HepG2 (cell line): ENCODE measurements at regions of chr12 and their contacts with region 1.

Region 1: DNA sequence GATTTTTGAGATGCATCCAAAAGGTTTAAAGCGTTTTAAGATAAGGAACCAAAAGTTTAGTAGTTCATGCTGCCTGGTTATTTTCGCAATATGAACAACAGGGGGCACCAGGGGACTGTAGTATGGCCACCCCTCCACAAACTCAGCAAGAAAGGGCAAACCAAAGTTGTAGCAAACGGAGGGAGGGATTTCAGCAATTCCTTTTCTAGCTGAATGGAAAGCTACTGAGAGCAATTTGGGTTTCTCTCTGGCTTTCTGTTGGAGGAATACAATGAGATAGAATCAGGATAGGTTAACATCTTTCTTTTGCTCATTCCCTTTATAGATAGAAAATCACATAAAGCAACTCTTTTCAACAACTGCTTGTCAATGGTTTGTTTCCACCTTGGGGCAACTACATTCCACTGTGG is 62.5 kb downstream of the DRAM1 start:
- DNase-seq: peak; percentile 60
- ATAC-seq: peak; percentile 89
- H3K4me3 ChIP-seq: no peak overlapping the region
- H3K27ac ChIP-seq: no peak overlapping the region
- H3K4me1 ChIP-seq: peaks cover 4% of the 10 kb centered on the region; the same call in 1 of the 2 replicates
- H3K27me3 ChIP-seq: peaks cover 0 to 3% of the 10 kb centered on the region in 2 experiments; a peak in 1 of 5 replicates
- CTCF ChIP-seq: peak; percentile 84
- EP300 ChIP-seq: no peak
- POLR2A ChIP-seq: no peak
- RAD21 ChIP-seq: peak; percentile 70

Region 2: DNA sequence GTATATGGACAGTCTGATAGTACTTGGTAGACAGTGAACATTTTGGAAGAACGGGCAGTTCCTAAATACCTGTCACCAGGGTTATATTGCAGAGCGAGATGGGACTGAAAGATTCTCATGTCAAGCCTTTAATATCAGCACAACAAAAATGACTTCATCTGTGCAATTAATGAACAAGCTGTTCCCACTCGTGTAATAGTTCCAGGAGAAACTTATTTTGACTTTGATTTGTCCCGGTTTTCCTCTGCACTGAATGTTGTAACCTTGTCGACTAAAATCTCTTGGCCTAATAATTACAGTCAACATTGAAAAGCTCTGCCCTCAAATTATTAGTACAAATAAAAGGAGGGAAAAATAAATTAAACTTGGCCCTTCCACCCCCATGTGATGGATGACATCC is 42.4 kb after region 1 on chr12:
- CTCF ChIA-PET with region 1: no interaction called
- POLR2A ChIA-PET with region 1: no interaction called
- in situ Hi-C with region 1: no loop called
- intact Hi-C with region 1: no loop called
- DNase-seq: no peak
- ATAC-seq: no peak
- H3K4me3 ChIP-seq: no peak overlapping the region
- H3K27ac ChIP-seq: no peak overlapping the region
- H3K4me1 ChIP-seq: no peaks in the 10 kb centered on the region
- H3K27me3 ChIP-seq: peaks cover 0 to 4% of the 10 kb centered on the region in 2 experiments; a peak in 1 of 5 replicates
- CTCF ChIP-seq: no peak
- EP300 ChIP-seq: no peak
- POLR2A ChIP-seq: no peak
- RAD21 ChIP-seq: no peak

Region 3: GRCh38 chr12:102095675-102096263 is 155.9 kb after region 1 on chr12:
- CTCF ChIA-PET with region 1: no interaction called
- POLR2A ChIA-PET with region 1: no interaction called
- in situ Hi-C with region 1: no loop called
- intact Hi-C with region 1: loop called (anchors 10 kb)
- DNase-seq: peak; percentile 9
- ATAC-seq: peak; percentile 64; the same call in 2 of the 3 replicates
- H3K4me3 ChIP-seq: no peak overlapping the region
- H3K27ac ChIP-seq: no peak overlapping the region
- H3K4me1 ChIP-seq: no peaks in the 10 kb centered on the region
- H3K27me3 ChIP-seq: no peaks in the 10 kb centered on the region
- CTCF ChIP-seq: peak; percentile 31
- EP300 ChIP-seq: no peak
- POLR2A ChIP-seq: no peak
- RAD21 ChIP-seq: no peak

Region 4: GRCh38 chr12:102169922-102170621 is 230.2 kb after region 1 on chr12:
- CTCF ChIA-PET with region 1: no interaction called
- POLR2A ChIA-PET with region 1: no interaction called
- in situ Hi-C with region 1: no loop called
- intact Hi-C with region 1: loop called (anchors 2 kb)
- DNase-seq: peak; percentile 9
- ATAC-seq: peak; percentile 72
- H3K4me3 ChIP-seq: no peak overlapping the region
- H3K27ac ChIP-seq: no peak overlapping the region
- H3K4me1 ChIP-seq: no peaks in the 10 kb centered on the region
- H3K27me3 ChIP-seq: no peaks in the 10 kb centered on the region
- CTCF ChIP-seq: peak; percentile 73
- EP300 ChIP-seq: no peak
- POLR2A ChIP-seq: no peak
- RAD21 ChIP-seq: no peak

Region 5: DNA sequence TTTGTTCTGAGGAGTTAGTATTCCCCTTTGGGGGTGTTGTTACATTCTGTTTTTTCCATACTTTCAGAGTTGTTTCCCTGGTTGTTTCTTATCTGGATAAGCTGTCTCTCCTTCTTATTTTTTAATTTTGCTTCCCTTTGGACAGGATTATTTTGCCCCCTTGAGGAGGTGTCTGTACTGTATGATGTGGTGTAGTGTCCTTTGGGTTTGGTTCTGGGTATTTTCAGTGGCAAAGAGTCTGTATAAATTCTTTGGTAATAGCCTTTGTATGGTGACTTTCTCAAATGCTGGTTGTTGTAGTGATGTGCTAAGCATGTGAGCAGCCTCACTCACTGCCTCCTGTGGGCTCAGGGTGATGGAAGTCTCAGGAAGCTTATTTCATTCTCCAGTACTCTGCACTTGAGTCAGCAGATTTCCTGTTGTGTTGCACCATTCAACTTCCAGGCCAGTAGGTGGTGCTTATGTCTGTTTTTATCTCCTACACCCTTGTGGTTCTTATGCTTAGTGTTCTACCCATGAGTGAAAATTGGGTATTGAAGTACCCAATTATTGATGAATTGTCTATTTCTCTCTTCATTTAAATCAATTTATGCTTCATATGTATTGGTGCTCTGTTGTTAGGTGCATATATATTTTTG is 361.1 kb after region 1 on chr12:
- CTCF ChIA-PET with region 1: no interaction called
- POLR2A ChIA-PET with region 1: no interaction called
- in situ Hi-C with region 1: no loop called
- intact Hi-C with region 1: loop called (anchors 2 kb)
- DNase-seq: peak; percentile 49
- ATAC-seq: peak; percentile 98
- H3K4me3 ChIP-seq: no peak overlapping the region
- H3K27ac ChIP-seq: no peak overlapping the region
- H3K4me1 ChIP-seq: no peaks in the 10 kb centered on the region
- H3K27me3 ChIP-seq: no peaks in the 10 kb centered on the region
- CTCF ChIP-seq: peak; percentile 78
- EP300 ChIP-seq: no peak
- POLR2A ChIP-seq: no peak
- RAD21 ChIP-seq: 0 out of 2 replicates have a peak, but pooled peaks have one; percentile 44

Region 6: GRCh38 chr12:102484428-102484958 is 544.6 kb after region 1 on chr12:
- CTCF ChIA-PET with region 1: interaction called, 13 read pairs
- POLR2A ChIA-PET with region 1: no interaction called
- in situ Hi-C with region 1: loop called (anchors 5 kb)
- intact Hi-C with region 1: loop called (anchors 2 kb)
- DNase-seq: peak; percentile 26
- ATAC-seq: peak; percentile 62
- H3K4me3 ChIP-seq: peak overlapping the region in 1 of 3 experiments; percentile 23; a peak in 1 of 6 replicates
- H3K27ac ChIP-seq: no peak overlapping the region
- H3K4me1 ChIP-seq: no peaks in the 10 kb centered on the region
- H3K27me3 ChIP-seq: no peaks in the 10 kb centered on the region
- CTCF ChIP-seq: peak; percentile 79
- EP300 ChIP-seq: no peak
- POLR2A ChIP-seq: no peak
- RAD21 ChIP-seq: no peak

Region 7: GRCh38 chr12:102702447-102703114 is 762.7 kb after region 1 on chr12:
- CTCF ChIA-PET with region 1: interaction called, 8 read pairs
- POLR2A ChIA-PET with region 1: no interaction called
- in situ Hi-C with region 1: loop called (anchors 25 kb)
- intact Hi-C with region 1: loop called (anchors 1 kb)
- DNase-seq: peak; percentile 54
- ATAC-seq: peak; percentile 79
- H3K4me3 ChIP-seq: no peak overlapping the region
- H3K27ac ChIP-seq: no peak overlapping the region
- H3K4me1 ChIP-seq: no peaks in the 10 kb centered on the region
- H3K27me3 ChIP-seq: no peaks in the 10 kb centered on the region
- CTCF ChIP-seq: peak; percentile 52
- EP300 ChIP-seq: no peak
- POLR2A ChIP-seq: no peak
- RAD21 ChIP-seq: no peak

Region 8: GRCh38 chr12:102811110-102811737 is 871.4 kb after region 1 on chr12:
- CTCF ChIA-PET with region 1: interaction called, 3 read pairs
- POLR2A ChIA-PET with region 1: no interaction called
- in situ Hi-C with region 1: no loop called
- intact Hi-C with region 1: loop called (anchors 1 kb)
- DNase-seq: peak; percentile 18
- ATAC-seq: peak; percentile 66; the same call in 2 of the 3 replicates
- H3K4me3 ChIP-seq: no peak overlapping the region
- H3K27ac ChIP-seq: no peak overlapping the region
- H3K4me1 ChIP-seq: no peaks in the 10 kb centered on the region
- H3K27me3 ChIP-seq: no peaks in the 10 kb centered on the region
- CTCF ChIP-seq: peak; percentile 60
- EP300 ChIP-seq: no peak
- POLR2A ChIP-seq: no peak
- RAD21 ChIP-seq: no peak